ENCODE measurements at regions of chr7 and their contacts with region 1.

Region 1: DNA sequence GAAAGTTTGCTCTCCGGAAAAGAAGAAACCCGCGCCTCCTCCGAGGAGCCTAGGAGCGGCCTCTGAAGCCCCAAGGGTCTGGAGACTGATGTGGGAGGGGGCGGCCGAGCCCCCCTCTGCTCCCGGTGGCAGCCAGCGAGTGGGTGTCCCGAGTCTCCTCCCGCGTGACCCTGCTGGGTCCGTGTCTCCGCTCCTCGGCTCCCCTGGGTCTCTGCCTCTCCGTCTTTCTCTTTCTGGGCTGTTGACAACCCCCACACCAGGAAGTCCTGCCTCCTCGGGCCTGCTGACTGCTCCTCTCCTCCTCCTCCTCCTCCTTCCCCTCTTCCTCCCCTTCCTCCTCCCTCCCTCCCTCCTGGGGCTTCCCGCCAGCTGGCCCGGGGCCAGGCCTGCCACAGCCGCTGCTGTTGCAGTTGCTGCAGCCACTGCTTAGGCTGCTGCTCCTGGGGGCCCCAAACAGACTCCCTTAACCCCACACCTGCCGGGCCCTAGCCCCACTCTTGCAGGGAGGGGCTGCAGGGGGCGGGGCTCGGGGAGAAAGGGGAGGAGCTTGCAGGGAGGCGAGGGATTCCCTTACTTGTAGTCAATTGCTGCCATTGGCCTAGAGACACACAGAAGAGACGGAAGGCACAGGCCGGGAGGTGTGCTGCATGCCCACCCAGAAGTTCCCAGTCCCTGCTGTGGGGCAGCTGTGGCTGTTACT is at the start of gene TSC22D4:
- DNase-seq: peak; percentile 94 to 98
- ATAC-seq: peak; percentile 92 to 96 (median 95)
- H3K4me3 ChIP-seq: peak within 1 kb of the TSS; percentile 98
- H3K27ac ChIP-seq: peak within 1 kb of the TSS; percentile 79
- H3K4me1 ChIP-seq: peaks cover 20% of the 10 kb centered on the region
- H3K27me3 ChIP-seq: no peaks in the 10 kb centered on the region
- CTCF ChIP-seq: no peak
- total RNA-seq, gene TSC22D4: 15.7 to 23.6 (median 17.6) TPM

Region 2: DNA sequence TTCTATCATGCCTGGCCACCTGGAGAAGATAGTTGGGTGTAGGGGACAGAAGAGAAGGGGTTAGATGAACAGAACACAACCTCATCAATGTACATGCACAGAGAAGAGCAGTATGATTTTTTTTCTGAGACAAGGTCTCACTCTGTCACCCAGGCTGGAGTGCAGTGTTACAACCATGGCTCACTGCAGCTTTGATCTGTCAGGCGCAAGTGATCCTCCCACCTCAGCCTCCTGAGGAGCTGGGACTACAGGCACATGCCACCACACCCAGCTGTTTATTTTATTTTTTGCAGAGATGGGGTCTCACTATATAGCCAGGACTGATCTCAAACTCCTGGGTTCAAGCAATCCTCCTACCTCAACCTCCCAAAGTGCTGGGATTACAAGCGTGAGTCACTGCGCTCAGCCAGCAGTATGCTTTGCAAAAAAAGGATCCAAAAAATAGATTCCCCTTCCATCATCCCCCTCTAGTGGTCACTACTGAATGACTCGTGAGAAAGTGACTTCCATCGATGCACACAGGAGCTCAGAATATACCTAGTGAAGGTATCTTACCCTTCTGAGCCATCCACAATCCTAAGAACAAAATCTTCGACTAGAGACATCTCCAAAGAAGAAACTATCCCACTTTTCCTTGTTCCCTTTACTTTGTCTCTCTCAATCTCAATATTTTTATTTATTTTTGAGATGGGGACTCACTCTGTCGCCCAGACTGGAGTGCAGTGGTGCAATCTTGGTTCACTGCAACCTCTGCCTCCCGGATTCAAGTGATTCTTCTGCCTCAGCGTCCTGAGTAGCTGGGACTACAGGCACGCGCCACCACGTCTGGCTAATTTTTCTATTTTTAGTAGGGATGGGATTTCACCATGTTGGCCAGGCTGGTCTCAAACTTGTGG is 71.6 kb before region 1 on chr7:
- intact Hi-C with region 1: no loop called
- DNase-seq: no peak
- ATAC-seq: peak; percentile 51 to 73 (median 56)
- H3K4me3 ChIP-seq: no peak overlapping the region
- H3K27ac ChIP-seq: no peak overlapping the region
- H3K4me1 ChIP-seq: no peaks in the 10 kb centered on the region
- H3K27me3 ChIP-seq: no peaks in the 10 kb centered on the region
- CTCF ChIP-seq: peak; percentile 41

Region 3: DNA sequence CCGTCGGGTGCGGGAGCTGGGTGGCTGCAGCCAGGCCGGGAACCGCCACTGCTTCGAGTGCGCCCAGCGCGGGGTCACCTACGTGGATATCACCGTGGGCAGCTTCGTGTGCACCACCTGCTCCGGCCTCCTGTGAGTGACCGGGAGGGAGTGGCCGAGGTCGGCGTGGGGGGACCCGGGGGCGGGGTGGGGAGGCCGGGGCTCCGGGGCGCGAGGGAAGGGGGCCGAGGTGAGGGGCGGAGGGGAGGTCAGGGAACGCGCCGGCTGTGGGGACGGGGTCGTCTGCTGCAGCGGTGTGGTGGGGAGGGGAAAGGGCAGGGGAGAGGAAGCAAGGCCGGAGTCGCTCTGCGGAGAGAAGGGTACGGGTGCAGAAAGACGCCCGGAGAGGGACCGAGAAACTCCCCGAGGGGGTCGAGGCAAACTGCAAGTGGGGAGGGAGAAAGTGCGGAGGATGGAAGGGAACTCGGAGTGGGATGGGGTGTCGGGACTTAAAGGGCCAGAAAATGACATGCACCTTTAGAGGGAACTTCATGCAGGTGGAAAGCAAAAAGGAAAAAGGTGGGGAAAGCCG is 60.4 kb after region 1 on chr7:
- intact Hi-C with region 1: loop called in 1 of 2 experiments (anchors 5 kb)
- DNase-seq: no peak
- ATAC-seq: no peak
- H3K4me3 ChIP-seq: peak overlapping the region; percentile 85
- H3K27ac ChIP-seq: peak overlapping the region; percentile 60
- H3K4me1 ChIP-seq: peaks cover 14% of the 10 kb centered on the region
- H3K27me3 ChIP-seq: no peaks in the 10 kb centered on the region
- CTCF ChIP-seq: no peak

Region 4: GRCh38 chr7:100719523-100720319 is 240.6 kb after region 1 on chr7:
- intact Hi-C with region 1: loop called in 1 of 2 experiments (anchors 10 kb)
- DNase-seq: no peak
- ATAC-seq: no peak
- H3K4me3 ChIP-seq: no peak overlapping the region
- H3K27ac ChIP-seq: no peak overlapping the region
- H3K4me1 ChIP-seq: no peaks in the 10 kb centered on the region
- H3K27me3 ChIP-seq: peaks cover 0 to 42% (median 14%) of the 10 kb centered on the region in 3 donors
- CTCF ChIP-seq: no peak

Region 5: DNA sequence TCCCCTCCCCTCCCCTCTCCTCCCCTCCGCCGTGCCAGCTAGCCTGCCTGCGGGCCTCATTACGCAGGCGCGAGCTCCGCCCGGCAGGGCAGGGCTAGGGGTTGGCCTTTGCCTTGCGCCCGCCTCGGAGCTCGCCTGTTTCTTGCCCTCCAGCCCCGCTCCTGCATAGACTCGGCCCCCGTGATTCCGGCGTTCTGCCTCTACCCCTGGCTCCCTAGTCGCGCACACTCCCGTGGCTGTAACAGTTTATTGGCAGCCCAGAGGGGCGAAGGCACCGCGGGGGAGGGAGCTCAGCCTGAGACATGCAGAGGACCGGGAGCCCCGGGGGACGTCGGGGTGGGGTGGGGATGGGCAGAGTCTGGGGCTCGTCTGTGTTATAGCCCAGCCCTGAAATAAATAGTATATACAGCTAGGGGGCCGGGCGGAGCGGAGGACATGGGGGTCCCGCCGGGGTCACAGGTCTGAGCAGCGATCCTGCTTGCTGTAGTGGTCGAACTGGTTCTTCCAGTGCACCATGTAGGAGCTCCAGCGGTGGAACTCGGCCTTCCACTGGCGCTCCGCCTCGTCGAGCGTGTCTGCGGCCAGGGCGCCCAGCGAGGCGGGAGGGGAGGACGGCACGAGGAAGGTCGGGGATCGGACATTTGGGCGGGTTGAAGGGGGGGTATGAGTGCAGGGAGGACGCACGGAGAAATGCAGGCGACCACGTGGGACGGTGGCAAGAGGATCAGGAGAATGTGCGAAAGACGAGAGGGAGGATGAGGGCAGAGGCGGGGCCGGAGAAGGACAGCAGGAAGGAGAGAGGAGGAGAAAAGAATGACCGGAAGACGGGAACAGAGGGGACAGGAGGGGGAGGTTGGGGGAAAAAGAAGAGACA is 410.9 kb after region 1 on chr7:
- intact Hi-C with region 1: no loop called
- DNase-seq: peak; percentile 94 to 98
- ATAC-seq: peak; percentile 85 to 89 (median 86)
- H3K4me3 ChIP-seq: peak overlapping the region; percentile 77
- H3K27ac ChIP-seq: peak overlapping the region; percentile 89
- H3K4me1 ChIP-seq: peaks cover 36% of the 10 kb centered on the region
- H3K27me3 ChIP-seq: no peaks in the 10 kb centered on the region
- CTCF ChIP-seq: no peak

Measured in psoas muscle (tissue), 8 donors.